ENCODE measurements at regions of chr13 and their contacts with region 1.

Region 1: GRCh38 chr13:26698392-26699196 is 62.0 kb downstream of the GPR12 start:
- DNase-seq: peak; percentile 88
- ATAC-seq: peak; percentile 75
- H3K4me3 Mint-ChIP-seq: peak overlapping the region; percentile 46
- H3K27ac Mint-ChIP-seq: no peak overlapping the region
- H3K4me1 Mint-ChIP-seq: peaks cover 15% of the 10 kb centered on the region
- H3K27me3 Mint-ChIP-seq: peaks cover 6% of the 10 kb centered on the region; the same call in 1 of the 2 replicates
- CTCF ChIP-seq: peak; percentile 99

Region 2: GRCh38 chr13:26377038-26377437 is 321.6 kb before region 1 on chr13:
- CTCF ChIA-PET with region 1: interaction called, 22 read pairs
- POLR2A ChIA-PET with region 1: no interaction called
- DNase-seq: peak; percentile 60
- ATAC-seq: peak; percentile 96
- H3K4me3 Mint-ChIP-seq: no peak overlapping the region
- H3K27ac Mint-ChIP-seq: no peak overlapping the region
- H3K4me1 Mint-ChIP-seq: peaks cover 14% of the 10 kb centered on the region
- H3K27me3 Mint-ChIP-seq: no peaks in the 10 kb centered on the region
- CTCF ChIP-seq: peak; percentile 51

Region 3: GRCh38 chr13:26442541-26442940 is 256.1 kb before region 1 on chr13:
- CTCF ChIA-PET with region 1: interaction called, 38 read pairs
- POLR2A ChIA-PET with region 1: no interaction called
- DNase-seq: no peak
- ATAC-seq: no peak
- H3K4me3 Mint-ChIP-seq: no peak overlapping the region
- H3K27ac Mint-ChIP-seq: no peak overlapping the region
- H3K4me1 Mint-ChIP-seq: no peaks in the 10 kb centered on the region
- H3K27me3 Mint-ChIP-seq: no peaks in the 10 kb centered on the region; the same call in 1 of the 2 replicates
- CTCF ChIP-seq: no peak

Region 4: GRCh38 chr13:26494571-26495195 is 203.9 kb before region 1 on chr13:
- CTCF ChIA-PET with region 1: interaction called, 26 read pairs
- POLR2A ChIA-PET with region 1: no interaction called
- DNase-seq: no peak
- ATAC-seq: no peak
- H3K4me3 Mint-ChIP-seq: no peak overlapping the region
- H3K27ac Mint-ChIP-seq: no peak overlapping the region
- H3K4me1 Mint-ChIP-seq: peaks cover 19% of the 10 kb centered on the region
- H3K27me3 Mint-ChIP-seq: no peaks in the 10 kb centered on the region; the same call in 1 of the 2 replicates
- CTCF ChIP-seq: no peak

Region 5: DNA sequence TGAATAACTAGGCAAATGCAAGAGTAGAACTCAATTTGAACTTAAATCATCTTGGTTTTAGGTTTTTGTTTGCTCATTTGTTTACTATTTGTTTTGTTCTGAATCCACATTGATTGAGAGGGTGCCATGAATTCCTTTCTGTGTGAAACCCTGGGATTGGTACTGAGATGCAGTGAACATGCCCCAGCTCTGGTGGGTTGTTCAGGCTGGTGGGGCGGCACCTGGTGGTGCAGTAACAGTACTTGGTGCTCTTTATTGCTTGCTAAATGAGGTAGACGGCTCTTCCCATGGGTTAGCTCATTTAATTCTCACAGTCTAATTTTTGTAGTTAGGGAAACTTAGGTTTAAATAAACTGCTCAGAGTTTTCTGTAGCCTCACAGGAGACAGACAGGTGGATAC is 92.7 kb before region 1 on chr13:
- CTCF ChIA-PET with region 1: interaction called, 14 read pairs
- POLR2A ChIA-PET with region 1: no interaction called
- DNase-seq: peak; percentile 50
- ATAC-seq: peak; percentile 97
- H3K4me3 Mint-ChIP-seq: no peak overlapping the region
- H3K27ac Mint-ChIP-seq: peak overlapping the region; percentile 58
- H3K4me1 Mint-ChIP-seq: peaks cover 34% of the 10 kb centered on the region
- H3K27me3 Mint-ChIP-seq: no peaks in the 10 kb centered on the region
- CTCF ChIP-seq: no peak

Region 6: GRCh38 chr13:26819046-26819445 is 120.5 kb after region 1 on chr13:
- CTCF ChIA-PET with region 1: no interaction called
- POLR2A ChIA-PET with region 1: no interaction called
- DNase-seq: no peak
- ATAC-seq: no peak
- H3K4me3 Mint-ChIP-seq: no peak overlapping the region
- H3K27ac Mint-ChIP-seq: no peak overlapping the region
- H3K4me1 Mint-ChIP-seq: no peaks in the 10 kb centered on the region
- H3K27me3 Mint-ChIP-seq: peaks cover 2% of the 10 kb centered on the region; the same call in 1 of the 2 replicates
- CTCF ChIP-seq: no peak

Region 7: DNA sequence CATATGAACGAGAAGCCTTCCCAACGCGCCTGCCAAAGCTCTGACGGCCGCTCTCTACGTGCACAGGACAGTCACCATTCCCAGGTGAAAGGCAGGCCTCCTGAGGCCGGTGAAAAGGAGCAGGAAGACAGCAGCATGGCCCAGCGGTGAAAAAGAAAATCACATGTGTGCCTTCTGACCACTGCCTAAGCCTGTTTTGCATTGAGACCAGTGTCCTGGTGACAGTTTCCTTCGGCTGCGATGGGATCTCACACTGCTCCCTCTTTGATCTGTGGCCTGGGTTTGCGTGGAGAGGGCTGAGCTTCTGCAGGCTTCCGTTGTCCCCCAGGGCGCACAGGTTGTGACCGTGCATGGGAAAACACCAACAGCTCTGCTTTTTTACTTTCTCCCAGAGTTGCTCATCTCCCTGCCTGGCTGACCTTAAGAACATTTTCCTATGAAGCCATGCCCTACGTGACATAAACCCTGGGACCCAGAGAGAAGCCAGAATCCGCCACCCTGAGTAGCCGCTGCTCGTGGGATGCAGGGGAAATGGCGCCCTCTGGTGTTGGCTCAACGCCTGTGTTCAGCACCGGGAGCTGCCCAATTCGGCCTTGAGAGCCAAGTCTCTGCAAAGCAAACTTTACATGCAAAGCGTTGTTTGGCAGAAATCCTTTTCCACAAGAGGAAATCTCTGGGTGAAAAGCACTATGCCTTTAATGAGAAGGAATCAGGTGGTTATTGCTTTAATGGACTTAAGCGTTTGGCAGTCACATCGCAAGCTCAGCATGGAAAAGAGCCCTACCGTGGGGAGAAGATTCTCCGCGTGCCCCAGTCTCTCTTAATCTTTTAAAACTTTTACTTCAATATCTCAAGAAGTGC is 174.2 kb after region 1 on chr13:
- CTCF ChIA-PET with region 1: interaction called, 29 read pairs
- POLR2A ChIA-PET with region 1: no interaction called
- DNase-seq: peak; percentile 88
- ATAC-seq: peak; percentile 92
- H3K4me3 Mint-ChIP-seq: no peak overlapping the region
- H3K27ac Mint-ChIP-seq: no peak overlapping the region
- H3K4me1 Mint-ChIP-seq: peaks cover 26% of the 10 kb centered on the region
- H3K27me3 Mint-ChIP-seq: 0 out of 2 replicates have a peak, but pooled peaks cover 2% of the 10 kb centered on the region
- CTCF ChIP-seq: peak; percentile 89

Measured in WTC11 (cell line).